IMR-90 (cell line): ENCODE measurements at regions of chr12 and their contacts with region 1.

Region 1: GRCh38 chr12:100447381-100447780 is 26.3 kb upstream of the NR1H4 start:
- DNase-seq: no peak
- ATAC-seq: no peak
- H3K4me3 ChIP-seq: no peak overlapping the region
- H3K27ac ChIP-seq: no peak overlapping the region
- H3K4me1 ChIP-seq: no peaks in the 10 kb centered on the region
- H3K27me3 ChIP-seq: no peaks in the 10 kb centered on the region; the same call in 1 of the 2 replicates
- CTCF ChIP-seq: no peak
- POLR2A ChIP-seq: no peak
- RAD21 ChIP-seq: no peak

Region 2: DNA sequence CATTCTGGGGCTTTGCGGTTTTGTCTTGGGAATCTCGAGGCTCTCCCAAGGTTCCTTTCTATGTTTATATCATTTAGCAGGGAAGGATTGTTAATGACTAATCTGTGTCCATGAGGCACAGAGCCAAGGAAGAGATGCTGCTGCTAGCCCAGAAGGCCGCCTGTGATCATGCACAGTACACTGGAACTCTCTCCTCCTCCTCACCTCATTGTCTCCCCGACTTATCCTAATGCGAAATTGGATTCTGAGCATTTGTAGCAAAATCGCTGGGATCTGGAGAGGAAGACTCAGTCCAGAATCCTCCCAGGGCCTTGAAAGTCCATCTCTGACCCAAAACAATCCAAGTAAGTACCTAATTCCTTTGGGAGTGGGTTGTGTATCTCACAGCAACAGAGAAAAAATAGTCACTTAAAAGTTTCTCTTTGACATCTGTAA is 26.4 kb after region 1 on chr12 and contains the start of gene NR1H4:
- CTCF ChIA-PET with region 1: no interaction called
- POLR2A ChIA-PET with region 1: no interaction called
- dilution Hi-C with region 1: no loop called
- in situ Hi-C with region 1: no loop called
- intact Hi-C with region 1: no loop called
- DNase-seq: peak; percentile 73
- ATAC-seq: peak; percentile 96
- H3K4me3 ChIP-seq: no peak within 1 kb of the TSS
- H3K27ac ChIP-seq: no peak within 1 kb of the TSS
- H3K4me1 ChIP-seq: no peaks in the 10 kb centered on the region
- H3K27me3 ChIP-seq: peaks cover 14% of the 10 kb centered on the region
- CTCF ChIP-seq: no peak
- POLR2A ChIP-seq: no peak
- RAD21 ChIP-seq: no peak
- total RNA-seq, gene NR1H4: not detected in 2 replicates

Region 3: DNA sequence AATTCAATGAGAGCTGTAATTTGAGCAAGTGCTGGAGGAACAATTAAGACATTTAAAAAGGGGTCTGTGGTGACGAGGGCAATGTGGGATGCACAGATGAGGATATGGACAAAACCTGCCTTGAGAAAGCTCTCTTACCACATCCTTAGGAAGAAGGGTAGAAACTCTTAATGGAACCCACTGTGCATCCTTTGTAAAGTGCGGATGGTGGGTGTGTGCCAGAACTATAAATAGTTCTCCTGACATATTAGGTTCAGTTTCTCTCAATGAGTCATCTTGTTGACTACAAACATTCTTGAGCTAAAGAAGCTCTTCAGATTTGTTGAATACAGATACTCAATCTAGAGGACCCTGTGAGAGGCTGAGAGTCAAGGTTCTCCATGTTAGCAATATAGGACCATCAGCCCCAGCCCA is 241.1 kb after region 1 on chr12:
- CTCF ChIA-PET with region 1: no interaction called
- POLR2A ChIA-PET with region 1: interaction called, 11 read pairs
- dilution Hi-C with region 1: no loop called
- in situ Hi-C with region 1: no loop called
- intact Hi-C with region 1: no loop called
- DNase-seq: no peak
- ATAC-seq: no peak
- H3K4me3 ChIP-seq: no peak overlapping the region
- H3K27ac ChIP-seq: no peak overlapping the region
- H3K4me1 ChIP-seq: no peaks in the 10 kb centered on the region
- H3K27me3 ChIP-seq: no peaks in the 10 kb centered on the region; the same call in 1 of the 2 replicates
- CTCF ChIP-seq: no peak
- POLR2A ChIP-seq: no peak
- RAD21 ChIP-seq: no peak